ENCODE measurements at regions of chrX and their contacts with region 1.

Region 1: DNA sequence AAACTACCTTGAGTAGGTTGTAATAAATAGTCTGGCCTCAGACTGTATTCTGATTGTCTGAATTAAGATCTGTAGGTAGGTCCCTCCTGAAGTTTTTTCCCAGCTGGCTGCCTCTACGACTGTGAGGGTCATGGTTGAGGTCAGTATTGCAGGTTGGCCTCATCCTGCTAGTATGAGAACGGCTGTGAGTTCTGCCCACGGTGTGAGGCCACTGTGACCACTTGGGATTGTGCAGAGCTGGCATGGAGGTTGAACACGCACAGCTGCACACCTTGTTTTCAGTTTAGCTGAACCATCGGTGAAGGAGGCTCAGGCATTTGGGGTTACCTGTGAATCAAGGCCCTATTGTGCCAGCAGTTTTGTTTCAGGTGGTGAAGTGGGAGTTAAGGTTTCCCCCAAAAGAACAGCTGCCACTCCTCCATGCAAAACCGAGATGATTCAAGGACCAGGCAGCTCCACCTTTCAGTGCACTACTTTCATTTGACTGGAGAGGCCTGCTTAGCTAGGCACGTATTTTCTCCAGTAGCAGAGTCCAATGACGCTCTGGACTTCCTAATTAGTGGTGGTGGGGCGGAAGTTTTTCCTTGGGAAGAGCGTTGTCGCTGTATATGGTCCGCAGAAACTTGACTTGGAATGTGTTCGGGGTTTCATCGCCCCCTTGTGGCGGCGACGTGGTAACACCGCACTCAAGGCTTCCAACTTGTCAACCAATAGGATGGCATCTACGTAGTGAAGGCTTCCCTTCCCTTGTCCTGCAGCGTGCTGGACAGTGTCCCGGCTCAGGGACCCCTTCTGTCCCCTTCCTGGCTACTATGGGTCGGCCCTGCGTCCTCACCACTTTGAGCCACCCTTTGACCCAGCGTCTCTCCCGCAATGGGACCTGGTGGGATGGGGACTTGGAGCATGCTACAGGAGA is 13.8 kb downstream of the CMC4 start:
- DNase-seq: peak; percentile 19 to 79 (median 38)
- ATAC-seq: peak; percentile 84
- H3K4me3 ChIP-seq: peak overlapping the region; percentile 35
- H3K4me3 Mint-ChIP-seq: peak overlapping the region; percentile 85
- H3K27ac ChIP-seq: no peak overlapping the region
- H3K27ac Mint-ChIP-seq: peak overlapping the region; percentile 61
- H3K4me1 ChIP-seq: peaks cover 14% of the 10 kb centered on the region
- H3K4me1 Mint-ChIP-seq: peaks cover 16% of the 10 kb centered on the region
- H3K27me3 ChIP-seq: no peaks in the 10 kb centered on the region
- H3K27me3 Mint-ChIP-seq: no peaks in the 10 kb centered on the region
- CTCF ChIP-seq: peak; percentile 69

Region 2: DNA sequence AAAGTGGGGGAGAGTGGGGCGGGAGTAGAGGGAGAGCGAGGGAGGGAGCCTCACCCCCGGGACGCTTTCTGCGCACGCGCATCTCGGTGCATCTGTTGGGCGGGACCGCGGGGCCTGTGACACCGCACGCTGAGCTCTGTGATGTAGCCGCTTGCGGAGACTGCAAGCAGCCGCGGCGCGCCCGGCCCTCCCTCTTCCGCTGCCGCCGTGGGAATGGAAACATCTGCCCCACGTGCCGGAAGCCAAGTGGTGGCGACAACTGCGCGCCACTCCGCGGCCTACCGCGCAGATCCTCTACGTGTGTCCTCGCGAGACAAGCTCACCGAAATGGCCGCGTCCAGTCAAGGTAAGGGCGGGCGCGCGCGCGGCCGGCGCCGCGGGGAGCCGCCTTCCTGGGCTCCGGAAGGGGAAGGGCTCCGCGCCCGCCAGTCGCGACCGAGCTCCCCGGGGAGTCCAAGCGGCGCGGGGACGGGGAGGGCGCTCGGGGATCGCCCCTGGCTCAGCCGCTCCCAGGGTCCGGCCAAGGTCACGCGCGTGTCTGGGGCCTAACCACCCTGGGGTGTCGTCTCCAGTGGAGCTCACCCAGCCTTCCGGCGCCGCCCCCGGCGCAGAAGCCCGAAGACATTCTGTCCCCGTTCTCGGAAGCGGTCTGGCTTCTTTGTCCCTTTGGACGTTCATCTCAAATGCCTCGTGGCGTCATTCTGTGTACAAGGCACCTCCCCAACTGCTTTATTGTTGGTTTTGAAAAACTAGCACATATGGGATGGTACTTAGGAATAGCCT is 30.2 kb before region 1 on chrX and contains the start of gene FUNDC2:
- CTCF ChIA-PET with region 1: no interaction called
- POLR2A ChIA-PET with region 1: interaction called, 7 read pairs
- intact Hi-C with region 1: loop called in 1 of 2 experiments (anchors 5 kb)
- DNase-seq: peak; percentile 87 to 98 (median 92)
- ATAC-seq: peak; percentile 86
- H3K4me3 ChIP-seq: peak within 1 kb of the TSS; percentile 88
- H3K4me3 Mint-ChIP-seq: peak within 1 kb of the TSS; percentile 95
- H3K27ac ChIP-seq: peak within 1 kb of the TSS; percentile 88 to 94
- H3K27ac Mint-ChIP-seq: peak within 1 kb of the TSS; percentile 98
- H3K4me1 ChIP-seq: peaks cover 8% of the 10 kb centered on the region
- H3K4me1 Mint-ChIP-seq: peaks cover 42% of the 10 kb centered on the region
- H3K27me3 ChIP-seq: no peaks in the 10 kb centered on the region
- H3K27me3 Mint-ChIP-seq: no peaks in the 10 kb centered on the region
- CTCF ChIP-seq: no peak
- total RNA-seq, gene FUNDC2: 37.2 to 37.4 TPM